Activated CD4-positive, alpha-beta T cell treated with anti-CD3 and anti-CD28 coated beads, Interleukin-2, amount 10 ng/mL, durations not matched to agents 24 days and 14 days (primary cell): ENCODE measurements at regions of chr11 and their contacts with region 1.

Region 1: GRCh38 chr11:9003573-9004309 is at the start of gene NRIP3:
- DNase-seq: peak; percentile 94
- H3K4me3 Mint-ChIP-seq: peak within 1 kb of the TSS; percentile 86
- H3K27ac Mint-ChIP-seq: peak within 1 kb of the TSS; percentile 77
- H3K4me1 Mint-ChIP-seq: peaks cover 26% of the 10 kb centered on the region
- H3K27me3 Mint-ChIP-seq: peaks cover 45% of the 10 kb centered on the region
- total RNA-seq, gene NRIP3: 4.8 and 5.3 TPM in 2 replicates

Region 2: DNA sequence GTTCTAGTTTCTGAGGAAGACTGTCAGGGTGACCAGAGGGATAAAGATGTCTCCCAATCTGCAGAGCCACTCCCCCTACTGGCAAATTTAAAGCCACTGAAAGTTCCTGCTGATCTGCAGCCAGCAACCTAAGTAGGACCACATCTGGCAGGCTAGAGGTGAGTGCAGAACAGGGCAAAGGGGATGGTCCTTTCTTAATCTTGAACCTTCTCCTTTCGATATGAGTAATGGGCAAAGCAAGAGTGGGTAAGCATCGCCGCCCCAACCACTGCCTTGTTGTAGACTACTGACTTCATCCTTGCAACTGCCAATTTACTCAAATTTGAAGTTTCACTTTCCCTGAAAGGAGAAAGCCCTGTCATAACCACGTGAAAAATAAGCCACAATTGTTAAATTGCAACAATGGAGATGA is 57.0 kb after region 1 on chr11:
- intact Hi-C with region 1: loop called (anchors 2 kb)
- DNase-seq: peak; percentile 84
- H3K4me3 Mint-ChIP-seq: no peak overlapping the region
- H3K27ac Mint-ChIP-seq: peak overlapping the region; percentile 30
- H3K4me1 Mint-ChIP-seq: peaks cover 14% of the 10 kb centered on the region
- H3K27me3 Mint-ChIP-seq: peaks cover 17% of the 10 kb centered on the region

Region 3: DNA sequence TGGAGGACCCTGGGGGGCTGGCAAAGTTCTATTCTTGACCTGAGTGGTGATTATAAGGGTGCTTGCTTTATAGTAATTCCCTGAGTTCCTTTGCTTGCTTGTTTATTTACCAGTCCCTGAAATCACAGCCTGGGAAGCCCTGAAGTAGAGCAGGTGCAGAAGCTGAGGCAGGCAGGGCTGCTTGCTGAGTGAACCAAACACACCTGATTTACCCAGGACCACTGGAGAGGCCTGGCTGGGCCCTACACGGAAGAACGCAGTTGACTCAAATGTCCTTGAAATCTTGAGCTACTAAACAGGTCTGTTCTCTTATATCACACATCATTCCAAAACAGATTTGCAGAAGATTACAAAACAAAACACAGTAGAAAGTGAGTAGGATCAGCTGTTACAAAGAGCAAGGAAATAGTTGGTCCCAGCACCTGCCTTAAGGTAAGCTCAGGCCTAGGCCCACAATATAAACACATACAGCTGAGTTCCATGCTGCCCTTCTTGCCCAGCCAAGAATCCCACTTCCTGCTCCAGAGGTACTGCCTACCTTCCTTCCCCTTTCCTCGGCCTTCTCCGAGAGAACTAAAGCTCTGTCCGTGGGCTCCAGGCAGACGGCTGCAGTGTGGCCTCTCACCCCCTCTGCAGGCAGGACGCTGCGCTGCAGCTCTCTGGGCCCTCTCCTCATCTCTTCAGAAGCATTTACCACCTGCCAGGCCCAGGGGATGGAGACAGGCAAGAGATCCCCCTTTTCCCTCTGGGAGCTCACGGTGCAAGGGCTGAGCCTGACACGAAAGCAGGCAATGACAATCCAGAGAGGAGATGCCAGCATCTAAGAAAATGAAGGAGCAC is 133.8 kb after region 1 on chr11:
- intact Hi-C with region 1: loop called (anchors 5 kb)
- DNase-seq: peak; percentile 92
- H3K4me3 Mint-ChIP-seq: no peak overlapping the region
- H3K27ac Mint-ChIP-seq: peak overlapping the region; percentile 80
- H3K4me1 Mint-ChIP-seq: peaks cover 29% of the 10 kb centered on the region
- H3K27me3 Mint-ChIP-seq: no peaks in the 10 kb centered on the region